ENCODE measurements at regions of chr6 and their contacts with region 1.

Region 1: GRCh38 chr6:14210663-14211561 is 93.3 kb downstream of the CD83 start:
- DNase-seq: peak; percentile 99
- CTCF ChIP-seq: peak; percentile 96

Region 2: DNA sequence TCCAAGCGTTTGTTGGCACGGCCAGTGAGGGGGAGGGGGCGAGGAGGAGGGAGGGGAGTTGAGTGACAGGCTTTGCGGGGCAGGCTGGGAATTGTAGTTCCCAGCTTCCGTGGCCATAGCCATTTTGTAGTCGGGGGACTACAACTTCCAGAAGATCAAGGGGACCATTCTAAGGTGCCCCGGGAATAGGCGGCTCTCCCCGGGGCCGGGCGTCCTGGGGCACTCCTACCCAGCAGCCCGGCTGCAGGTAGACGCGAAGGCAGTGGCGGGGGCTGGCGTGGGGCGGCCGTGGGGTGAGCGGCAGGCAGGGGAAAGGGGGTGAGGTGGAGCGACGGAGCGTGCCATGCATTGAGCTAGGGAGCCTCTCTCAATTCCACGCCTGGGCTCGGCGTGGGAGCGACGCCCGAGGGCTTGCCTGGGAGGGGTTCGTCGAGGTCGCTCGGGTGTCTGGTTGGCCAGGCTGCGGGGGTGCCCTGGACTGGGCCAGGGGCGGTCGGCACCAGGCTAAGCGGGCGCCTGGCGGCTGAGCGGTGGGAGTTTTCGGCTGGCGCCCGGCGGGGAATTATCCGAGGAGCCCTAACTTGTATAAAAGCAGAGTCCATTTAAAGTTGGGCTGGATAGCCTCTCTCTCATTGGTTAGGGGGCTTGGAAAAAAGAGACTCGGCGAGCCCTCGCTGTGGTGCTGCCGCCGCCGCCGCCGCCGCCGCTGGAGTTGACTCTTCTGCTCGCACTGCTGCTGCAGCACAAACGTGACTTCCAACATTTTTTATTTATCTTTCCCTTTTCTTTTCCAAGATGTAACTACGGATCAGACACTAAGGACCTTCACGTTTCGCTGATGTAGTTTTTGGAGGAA is 1034.7 kb after region 1 on chr6 and contains the start of gene JARID2:
- in situ Hi-C with region 1: loop called (anchors 25 kb)
- DNase-seq: peak; percentile 98
- CTCF ChIP-seq: no peak

Region 3: DNA sequence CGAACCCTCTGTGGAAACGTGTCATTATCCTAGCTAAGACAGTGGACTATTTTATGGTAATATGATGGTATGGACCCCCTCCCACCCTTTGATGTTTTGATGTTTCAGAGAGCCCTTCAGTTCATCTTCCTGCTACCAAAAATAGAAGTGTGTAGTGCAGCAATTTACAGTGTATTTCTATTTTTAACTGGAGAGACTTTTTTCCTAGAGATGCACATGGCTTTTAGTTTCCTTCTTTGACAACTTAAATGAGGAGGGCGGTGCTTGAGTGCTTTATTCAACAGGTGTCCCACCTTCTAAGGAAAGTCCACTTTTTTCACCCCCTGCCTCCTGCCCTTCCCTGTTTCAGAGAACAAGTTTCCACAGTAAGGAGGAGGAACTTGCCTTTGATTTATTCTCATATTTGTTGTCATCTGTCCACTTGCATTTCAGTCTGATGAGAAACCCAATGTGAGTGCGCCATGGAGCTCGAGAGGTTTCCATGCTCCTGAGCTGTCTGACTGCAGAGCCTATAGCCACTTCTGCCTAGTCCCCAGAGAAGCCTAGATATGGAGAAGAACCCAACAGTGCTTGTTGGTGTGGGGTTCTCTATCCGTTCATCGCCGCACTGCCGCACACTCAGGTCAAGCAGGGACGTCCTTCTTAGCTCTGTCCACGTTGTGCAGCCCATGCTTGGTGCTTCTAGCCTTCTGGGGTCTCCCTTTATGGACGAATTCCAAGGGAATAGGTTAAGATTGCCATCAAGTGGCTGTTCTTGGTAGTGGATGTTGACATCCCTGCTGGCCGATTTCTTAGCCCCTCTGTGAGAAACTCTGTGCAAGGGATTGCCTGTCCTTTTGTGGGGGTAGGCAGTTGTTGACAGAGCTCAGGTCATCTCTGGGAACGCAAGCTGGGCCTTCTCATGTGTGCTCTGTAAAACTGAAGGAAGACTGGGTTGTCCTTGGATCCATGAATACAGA is 1179.1 kb after region 1 on chr6:
- in situ Hi-C with region 1: loop called (anchors 25 kb)
- DNase-seq: peak; percentile 57
- CTCF ChIP-seq: peak; percentile 68